ENCODE measurements at regions of chr16 and their contacts with region 1.

Region 1: DNA sequence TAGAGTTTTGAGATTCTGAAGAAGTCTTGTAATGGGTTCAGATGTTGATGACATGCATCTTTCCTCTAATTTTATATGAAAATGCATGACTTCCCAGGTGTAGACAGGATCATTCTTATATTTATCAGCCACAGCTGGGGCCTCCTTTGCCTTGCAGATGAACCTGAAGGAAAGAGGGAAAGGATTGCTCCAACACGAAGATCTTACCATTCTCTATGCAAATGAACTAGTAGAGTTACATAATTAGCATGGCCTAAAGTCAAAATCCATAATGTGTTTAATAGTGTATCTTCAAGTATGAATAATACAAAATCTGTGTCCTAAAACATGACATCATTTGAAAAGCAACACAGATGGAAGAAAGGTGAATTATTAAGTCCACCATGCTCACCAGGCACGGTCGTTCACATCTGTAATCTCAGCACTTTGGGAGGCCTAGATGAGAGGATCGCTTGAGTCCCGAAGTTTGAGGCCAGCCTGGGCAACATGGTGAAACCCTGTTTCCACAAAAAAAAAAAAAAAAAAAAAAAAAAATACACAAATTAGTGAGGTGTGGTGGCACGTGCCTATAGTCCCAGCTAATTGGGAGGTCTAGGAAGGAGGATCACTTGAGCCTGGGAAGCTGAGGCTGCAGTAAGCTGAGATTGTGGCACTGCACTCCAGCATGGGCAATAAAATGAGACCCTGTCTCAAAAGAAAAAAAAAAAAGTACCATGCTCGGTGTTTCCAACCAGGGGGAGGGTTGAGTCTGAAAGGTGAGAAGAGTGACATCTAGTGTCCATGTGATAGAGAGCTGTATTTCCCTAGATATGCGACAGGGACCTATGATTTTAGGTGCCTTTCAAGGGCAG is 6.3 kb downstream of the VWA3A start:
- DNase-seq: no peak
- H3K4me3 ChIP-seq: no peak overlapping the region
- H3K27ac ChIP-seq: no peak overlapping the region
- H3K4me1 ChIP-seq: peaks cover 2 to 7% (median 4%) of the 10 kb centered on the region in 4 experiments; a peak in 4 of 7 replicates
- H3K27me3 ChIP-seq: no peaks in the 10 kb centered on the region
- CTCF ChIP-seq: peak in 2 of 3 experiments; percentile 81 to 82; a peak in 3 of 4 replicates
- EP300 ChIP-seq: no peak
- POLR2A ChIP-seq: no peak
- RAD21 ChIP-seq: peak; percentile 77 to 80

Region 2: DNA sequence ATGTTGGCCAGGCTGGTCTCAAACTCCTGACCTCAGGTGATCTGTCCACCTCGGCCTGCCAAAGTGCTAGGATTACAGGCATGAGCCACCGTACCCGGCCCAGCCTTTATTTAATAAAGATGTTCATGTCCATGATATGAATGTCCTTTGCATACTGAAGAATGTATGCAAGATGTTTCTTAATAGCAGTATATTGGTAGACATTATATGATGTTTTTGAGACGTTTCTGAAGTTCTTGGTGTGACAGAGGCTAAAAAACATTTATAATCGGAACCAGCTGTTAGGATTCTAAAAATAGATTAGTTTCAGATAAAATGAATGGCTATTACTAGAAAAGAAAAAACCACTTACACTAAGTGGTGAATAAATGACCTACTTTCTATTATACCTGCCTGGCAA is 109.5 kb before region 1 on chr16:
- CTCF ChIA-PET with region 1: interaction called, 10 read pairs
- POLR2A ChIA-PET with region 1: no interaction called
- DNase-seq: no peak
- H3K4me3 ChIP-seq: no peak overlapping the region
- H3K27ac ChIP-seq: no peak overlapping the region
- H3K4me1 ChIP-seq: peaks cover 0 to 2% (median 0%) of the 10 kb centered on the region in 4 experiments; a peak in 1 of 7 replicates
- H3K27me3 ChIP-seq: no peaks in the 10 kb centered on the region
- CTCF ChIP-seq: no peak
- EP300 ChIP-seq: no peak
- POLR2A ChIP-seq: no peak
- RAD21 ChIP-seq: no peak

Region 3: DNA sequence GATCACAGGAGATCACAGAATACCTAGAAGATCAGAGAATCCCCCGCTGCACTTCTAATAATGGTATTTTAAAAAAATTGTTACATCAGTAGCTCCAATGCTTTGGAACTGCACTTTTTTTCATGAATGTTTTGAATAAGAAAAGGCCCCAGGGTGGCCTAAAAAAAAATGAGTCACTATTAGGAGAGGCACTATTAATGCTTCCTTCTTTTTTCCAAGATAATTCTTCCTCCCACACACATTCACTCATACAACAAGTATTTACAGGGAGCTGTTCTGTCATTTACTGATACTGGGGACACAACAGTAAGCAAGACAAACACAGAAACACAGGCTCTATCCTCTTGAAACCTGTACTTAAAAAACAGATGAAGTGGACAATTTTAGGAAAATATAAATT is 97.0 kb before region 1 on chr16:
- CTCF ChIA-PET with region 1: interaction called, 16 read pairs
- POLR2A ChIA-PET with region 1: no interaction called
- DNase-seq: no peak
- H3K4me3 ChIP-seq: no peak overlapping the region
- H3K27ac ChIP-seq: no peak overlapping the region
- H3K4me1 ChIP-seq: no peaks in the 10 kb centered on the region
- H3K27me3 ChIP-seq: 0 out of 7 replicates have a peak, but pooled peaks cover 0 to 2% (median under 1%) of the 10 kb centered on the region in 4 experiments
- CTCF ChIP-seq: no peak
- EP300 ChIP-seq: no peak
- POLR2A ChIP-seq: no peak
- RAD21 ChIP-seq: no peak

Region 4: DNA sequence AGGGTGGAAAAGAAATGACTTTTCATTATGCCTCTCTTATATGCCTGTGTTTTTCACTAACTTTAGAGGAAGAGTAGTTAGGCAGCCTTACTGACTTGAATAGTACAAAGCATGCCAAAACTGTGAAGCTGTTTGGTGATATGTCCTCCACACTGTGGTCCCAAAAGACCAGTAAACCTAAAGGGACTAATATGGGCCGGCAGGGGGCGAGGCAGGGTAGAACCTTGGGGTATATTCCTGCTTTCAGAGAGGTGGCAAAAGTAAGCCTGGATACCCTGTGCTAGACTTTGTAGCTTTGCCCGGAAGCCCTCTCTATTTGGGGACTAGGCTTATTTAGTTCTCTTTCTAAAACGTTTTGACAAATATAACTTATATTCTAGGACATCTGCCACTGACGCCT is 42.8 kb before region 1 on chr16:
- CTCF ChIA-PET with region 1: interaction called, 11 read pairs
- POLR2A ChIA-PET with region 1: no interaction called
- DNase-seq: peak in 1 of 2 experiments; percentile 69
- H3K4me3 ChIP-seq: no peak overlapping the region
- H3K27ac ChIP-seq: no peak overlapping the region
- H3K4me1 ChIP-seq: no peaks in the 10 kb centered on the region
- H3K27me3 ChIP-seq: no peaks in the 10 kb centered on the region
- CTCF ChIP-seq: peak; percentile 59 to 70 (median 67)
- EP300 ChIP-seq: no peak
- POLR2A ChIP-seq: no peak
- RAD21 ChIP-seq: peak; percentile 45 to 59

Region 5: DNA sequence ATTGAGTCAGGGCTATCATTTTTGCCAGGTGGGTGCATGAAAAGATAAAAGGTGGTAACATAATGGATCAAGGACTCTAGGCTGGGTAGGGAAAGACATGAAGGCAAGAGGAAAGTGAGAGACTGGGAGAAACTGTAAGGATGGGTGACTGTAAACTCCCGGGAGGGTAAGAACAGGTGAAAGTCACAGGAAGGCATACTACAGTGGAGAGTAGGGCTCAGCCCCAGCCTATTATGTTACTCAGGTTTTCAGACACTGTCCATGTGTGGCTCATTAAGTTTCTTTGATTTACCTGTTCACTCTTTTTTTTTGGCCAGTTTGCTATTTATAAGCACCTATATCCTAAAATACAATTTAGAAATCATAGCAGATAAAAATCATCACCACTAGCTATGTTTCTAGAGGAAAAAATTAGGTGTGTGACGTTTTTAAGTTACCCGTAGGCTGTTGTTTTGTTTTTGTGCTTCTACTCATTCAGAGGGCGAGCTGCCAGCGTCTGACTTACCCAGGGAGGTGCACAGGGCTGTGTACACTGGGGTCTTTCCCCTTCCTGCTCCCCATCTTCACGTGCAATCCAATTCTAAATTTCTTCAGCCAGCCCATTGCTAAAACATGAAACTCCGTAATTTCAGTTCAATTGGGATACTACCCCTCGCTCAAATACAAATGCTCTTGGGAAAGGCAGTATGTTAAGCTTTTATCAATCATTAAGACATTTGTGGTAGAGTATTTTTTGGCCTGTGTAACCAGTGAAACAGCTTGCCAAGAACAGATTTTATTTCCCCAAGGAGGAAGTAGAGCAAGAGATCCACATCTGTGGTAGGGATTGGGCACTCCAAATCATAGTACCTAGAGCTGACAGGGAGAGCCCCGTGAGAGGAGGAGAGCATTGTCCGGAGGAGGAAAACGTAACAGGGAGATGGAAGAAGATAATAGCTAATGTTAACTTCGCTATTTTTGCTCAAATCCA is 28.0 kb before region 1 on chr16:
- CTCF ChIA-PET with region 1: interaction called, 63 read pairs
- POLR2A ChIA-PET with region 1: no interaction called
- DNase-seq: no peak
- H3K4me3 ChIP-seq: no peak overlapping the region
- H3K27ac ChIP-seq: no peak overlapping the region
- H3K4me1 ChIP-seq: no peaks in the 10 kb centered on the region
- H3K27me3 ChIP-seq: no peaks in the 10 kb centered on the region
- CTCF ChIP-seq: no peak
- EP300 ChIP-seq: no peak
- POLR2A ChIP-seq: no peak
- RAD21 ChIP-seq: no peak

Region 6: GRCh38 chr16:22109258-22109898 is 10.7 kb after region 1 on chr16:
- CTCF ChIA-PET with region 1: interaction called, 34 read pairs
- POLR2A ChIA-PET with region 1: interaction called, 3 read pairs
- DNase-seq: no peak
- H3K4me3 ChIP-seq: no peak overlapping the region
- H3K27ac ChIP-seq: no peak overlapping the region
- H3K4me1 ChIP-seq: peaks cover 0 to under 1% (median 0%) of the 10 kb centered on the region in 4 experiments; a peak in 1 of 7 replicates
- H3K27me3 ChIP-seq: no peaks in the 10 kb centered on the region
- CTCF ChIP-seq: no peak
- EP300 ChIP-seq: no peak
- POLR2A ChIP-seq: no peak
- RAD21 ChIP-seq: no peak

Region 7: GRCh38 chr16:22117609-22118008 is 19.0 kb after region 1 on chr16:
- CTCF ChIA-PET with region 1: interaction called, 34 read pairs
- POLR2A ChIA-PET with region 1: interaction called, 3 read pairs
- DNase-seq: no peak
- H3K4me3 ChIP-seq: no peak overlapping the region
- H3K27ac ChIP-seq: no peak overlapping the region
- H3K4me1 ChIP-seq: no peaks in the 10 kb centered on the region
- H3K27me3 ChIP-seq: no peaks in the 10 kb centered on the region
- CTCF ChIP-seq: no peak
- EP300 ChIP-seq: no peak
- POLR2A ChIP-seq: no peak
- RAD21 ChIP-seq: no peak

Measured in H1 (cell line).